Left colon (tissue), 2 donors: ENCODE measurements at regions of chr9 and their contacts with region 1.

Region 1: GRCh38 chr9:99140685-99141314 is 35.9 kb downstream of the TGFBR1 start:
- DNase-seq: peak in 1 of 2 donors; percentile 31
- ATAC-seq: peak; percentile 69

Region 2: DNA sequence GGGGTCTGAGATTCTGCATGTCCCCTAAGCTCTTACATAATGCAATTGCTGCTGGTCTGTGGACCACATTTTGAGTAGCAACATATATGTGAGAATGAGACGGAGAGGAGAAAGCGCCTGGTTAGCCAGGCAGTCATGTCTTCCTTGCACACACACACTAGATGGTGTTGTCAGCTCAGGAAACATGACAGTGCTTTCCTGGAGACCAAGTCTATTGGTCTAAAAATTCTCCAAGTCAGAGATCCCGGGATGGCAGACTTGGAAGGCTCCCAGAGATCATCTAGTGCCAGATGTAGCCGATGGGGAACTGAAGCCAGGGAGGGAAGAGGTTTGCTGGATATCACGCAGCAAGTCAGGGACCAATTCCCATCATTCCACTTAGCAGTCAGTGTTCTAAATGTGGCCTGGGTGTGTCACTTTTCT is 279.9 kb before region 1 on chr9:
- intact Hi-C with region 1: loop called in 1 of 2 experiments (anchors 5 kb)
- DNase-seq: peak; percentile 32 to 67
- ATAC-seq: peak; percentile 43

Region 3: GRCh38 chr9:98994182-98995058 is 146.4 kb before region 1 on chr9:
- intact Hi-C with region 1: no loop called
- DNase-seq: no peak
- ATAC-seq: no peak

Region 4: GRCh38 chr9:99092643-99093491 is 47.9 kb before region 1 on chr9:
- intact Hi-C with region 1: no loop called
- DNase-seq: no peak
- ATAC-seq: no peak